ENCODE measurements at regions of chr1 and their contacts with region 1.

Region 1: DNA sequence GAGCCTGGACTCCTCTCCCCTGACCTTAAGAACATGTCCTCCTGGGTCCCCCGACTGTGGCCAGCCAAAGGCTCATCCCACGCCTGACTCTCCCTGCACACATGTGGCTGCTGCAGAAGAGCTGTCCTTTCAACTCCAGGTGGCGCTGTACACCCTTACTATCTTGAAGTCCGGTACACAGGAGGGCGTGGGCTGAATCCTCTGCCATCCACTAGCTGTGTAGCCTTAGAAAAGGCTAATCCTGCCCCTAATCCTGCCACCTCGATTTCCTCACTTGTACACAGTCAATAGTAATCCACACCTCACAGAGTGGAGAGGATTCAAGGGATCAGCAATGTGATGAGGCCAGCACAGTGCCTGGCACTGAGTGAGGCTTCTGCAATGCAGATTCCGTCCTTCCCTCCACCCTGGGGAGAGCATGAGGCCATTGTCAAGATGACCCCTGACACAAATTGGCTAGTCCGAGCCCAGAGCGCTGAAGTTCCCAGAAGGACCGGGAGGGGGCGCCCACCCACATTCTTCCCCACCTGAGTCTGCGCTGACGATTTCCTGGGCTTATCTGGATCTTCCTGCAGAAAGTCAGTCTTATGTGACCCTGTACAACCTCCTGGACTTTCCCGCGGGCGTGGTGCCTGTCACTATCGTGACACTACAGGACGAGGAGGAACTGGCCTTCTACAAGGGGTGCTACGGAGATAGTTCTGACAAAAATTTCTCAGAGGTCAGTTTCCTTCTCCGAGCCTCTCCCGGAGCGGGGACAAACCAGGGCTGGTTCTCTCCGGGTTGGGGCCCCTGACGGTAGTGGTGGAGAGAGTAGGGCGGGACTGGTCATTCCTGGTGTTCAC is 47.1 kb upstream of the DMBX1 start:
- H3K4me3 ChIP-seq: peak overlapping the region; percentile 45
- H3K27ac ChIP-seq: no peak overlapping the region; the same call in 1 of the 2 replicates
- H3K4me1 ChIP-seq: no peaks in the 10 kb centered on the region
- CTCF ChIP-seq: peak; percentile 91

Region 2: DNA sequence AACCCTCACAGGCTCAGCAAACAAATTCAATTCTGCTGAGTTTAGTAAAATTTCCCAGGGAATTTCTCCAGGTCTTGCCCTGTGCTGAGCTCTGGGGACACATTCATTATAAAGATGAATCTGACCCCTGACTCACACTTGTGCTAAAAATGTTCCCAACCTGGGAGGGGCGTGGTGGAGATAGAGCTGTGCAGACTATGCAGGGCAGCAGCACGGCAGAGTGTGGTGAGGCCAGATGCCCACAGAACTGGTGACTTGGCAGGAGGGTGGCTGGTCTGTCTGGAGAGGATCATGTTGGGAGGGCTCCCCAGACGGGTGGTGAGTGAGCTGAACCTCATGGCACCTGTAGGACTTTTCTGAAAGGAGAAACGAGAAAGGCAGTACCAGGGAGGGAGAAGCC is 16.8 kb before region 1 on chr1:
- CTCF ChIA-PET with region 1: interaction called, 15 read pairs
- POLR2A ChIA-PET with region 1: no interaction called
- H3K4me3 ChIP-seq: no peak overlapping the region
- H3K27ac ChIP-seq: no peak overlapping the region
- H3K4me1 ChIP-seq: no peaks in the 10 kb centered on the region
- CTCF ChIP-seq: no peak

Region 3: DNA sequence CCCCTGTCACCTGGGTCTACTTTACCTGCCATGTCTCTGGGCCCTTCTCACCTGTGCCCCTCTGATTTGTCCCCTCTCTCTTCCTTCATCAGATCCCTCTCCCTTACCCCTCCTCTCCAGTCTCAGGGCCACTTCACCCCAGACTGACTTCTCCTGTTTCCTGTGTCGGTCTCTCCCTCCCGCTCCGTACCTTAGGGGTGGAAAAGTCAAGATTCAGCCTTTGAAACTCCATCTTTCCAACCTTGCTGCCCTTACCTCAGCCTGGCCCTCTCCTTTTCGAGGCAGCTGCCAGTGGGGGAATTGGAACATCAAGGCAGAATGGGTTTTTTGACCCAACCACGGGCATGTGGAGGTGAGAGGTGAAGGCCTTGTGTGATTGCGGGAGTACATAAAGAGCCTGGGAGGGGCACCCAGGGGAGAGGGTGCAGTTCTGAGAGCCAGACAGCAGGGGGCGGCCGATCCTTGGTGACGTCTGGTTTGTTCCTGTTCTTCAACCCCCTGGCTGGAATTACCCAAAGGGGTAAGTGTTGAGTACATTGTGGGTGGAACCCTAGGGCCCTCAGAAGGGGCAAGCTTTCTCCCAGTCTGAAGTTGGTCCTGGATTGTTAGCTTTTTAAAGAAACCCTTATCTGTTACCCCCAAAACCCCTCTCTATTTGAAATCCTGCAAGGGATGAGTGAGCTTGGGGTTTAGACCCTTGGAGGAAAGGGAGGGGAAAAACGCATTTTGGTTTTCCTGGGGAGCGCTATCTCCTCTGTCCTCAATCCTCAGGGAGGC is 34.8 kb after region 1 on chr1:
- CTCF ChIA-PET with region 1: interaction called, 25 read pairs
- POLR2A ChIA-PET with region 1: no interaction called
- H3K4me3 ChIP-seq: no peak overlapping the region
- H3K27ac ChIP-seq: no peak overlapping the region
- H3K4me1 ChIP-seq: no peaks in the 10 kb centered on the region
- CTCF ChIP-seq: peak; percentile 49

Region 4: DNA sequence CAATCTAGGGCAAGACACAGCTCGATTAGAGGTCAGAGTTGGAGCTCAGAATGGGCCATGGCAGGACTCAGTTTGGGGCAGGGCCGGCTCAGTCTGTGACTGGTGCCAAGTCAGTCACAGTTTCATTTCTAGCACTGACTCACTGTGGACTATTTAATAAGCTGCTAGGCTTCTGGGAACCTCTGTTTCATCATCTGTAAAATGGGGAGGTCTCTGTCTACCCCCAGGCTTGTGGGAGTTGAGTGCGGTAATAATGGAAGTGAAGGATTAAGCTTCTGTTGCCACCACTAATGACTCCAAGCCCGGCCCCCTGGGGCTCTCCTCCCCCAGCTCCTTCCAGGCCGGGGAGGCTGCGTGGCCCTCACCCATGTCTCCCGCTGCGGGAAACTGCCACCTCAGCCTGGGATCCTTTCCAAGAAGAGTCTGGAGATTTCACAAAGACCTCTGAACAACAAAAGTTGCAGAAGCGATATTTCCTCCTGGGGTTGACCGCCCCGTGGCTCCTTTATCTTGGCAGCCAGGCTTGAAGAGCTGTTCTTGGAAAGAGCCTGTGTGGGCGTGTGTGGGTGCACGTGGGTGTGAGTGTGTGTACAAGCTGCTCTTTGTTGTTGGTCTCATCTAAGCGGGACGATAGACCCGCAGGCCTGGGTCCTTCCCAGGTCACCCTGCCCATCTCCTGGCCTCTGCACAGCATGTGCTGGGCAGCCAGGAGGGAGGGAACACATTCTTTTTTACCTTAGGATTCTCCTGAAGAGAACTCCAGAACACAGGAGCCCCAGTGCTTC is 79.8 kb after region 1 on chr1:
- CTCF ChIA-PET with region 1: interaction called, 315 read pairs
- POLR2A ChIA-PET with region 1: no interaction called
- H3K4me3 ChIP-seq: no peak overlapping the region
- H3K27ac ChIP-seq: no peak overlapping the region
- H3K4me1 ChIP-seq: peaks cover 5% of the 10 kb centered on the region; the same call in 1 of the 2 replicates
- CTCF ChIP-seq: no peak

Region 5: GRCh38 chr1:46539972-46540371 is 97.4 kb after region 1 on chr1:
- CTCF ChIA-PET with region 1: interaction called, 315 read pairs
- POLR2A ChIA-PET with region 1: no interaction called
- H3K4me3 ChIP-seq: no peak overlapping the region
- H3K27ac ChIP-seq: no peak overlapping the region
- H3K4me1 ChIP-seq: no peaks in the 10 kb centered on the region
- CTCF ChIP-seq: no peak

Region 6: GRCh38 chr1:46653405-46653958 is 210.9 kb after region 1 on chr1:
- CTCF ChIA-PET with region 1: interaction called, 10 read pairs
- POLR2A ChIA-PET with region 1: no interaction called
- H3K4me3 ChIP-seq: no peak overlapping the region
- H3K27ac ChIP-seq: no peak overlapping the region
- H3K4me1 ChIP-seq: no peaks in the 10 kb centered on the region
- CTCF ChIP-seq: no peak

Measured in HEK293 (cell line).